AG04450 (cell line): ENCODE measurements at regions of chr10 and their contacts with region 1.

Region 1: GRCh38 chr10:15211464-15211979 is 43.0 kb upstream of the NMT2 start:
- DNase-seq: peak; percentile 67
- H3K4me3 ChIP-seq: peak overlapping the region; percentile 15
- H3K27ac ChIP-seq: peak overlapping the region; percentile 82
- H3K27me3 ChIP-seq: no peaks in the 10 kb centered on the region
- CTCF ChIP-seq: no peak

Region 2: GRCh38 chr10:14843327-14843988 is 368.1 kb before region 1 on chr10:
- CTCF ChIA-PET with region 1: interaction called, 13 read pairs
- POLR2A ChIA-PET with region 1: no interaction called
- DNase-seq: no peak
- H3K4me3 ChIP-seq: no peak overlapping the region
- H3K27ac ChIP-seq: no peak overlapping the region
- H3K27me3 ChIP-seq: no peaks in the 10 kb centered on the region
- CTCF ChIP-seq: no peak

Region 3: GRCh38 chr10:15237351-15237750 is 25.8 kb after region 1 on chr10:
- CTCF ChIA-PET with region 1: no interaction called
- POLR2A ChIA-PET with region 1: no interaction called
- DNase-seq: peak; percentile 16
- H3K4me3 ChIP-seq: no peak overlapping the region
- H3K27ac ChIP-seq: no peak overlapping the region
- H3K27me3 ChIP-seq: no peaks in the 10 kb centered on the region
- CTCF ChIP-seq: no peak